Left cardiac atrium (tissue), 4 donors: ENCODE measurements at regions of chr17 and their contacts with region 1.

Region 1: DNA sequence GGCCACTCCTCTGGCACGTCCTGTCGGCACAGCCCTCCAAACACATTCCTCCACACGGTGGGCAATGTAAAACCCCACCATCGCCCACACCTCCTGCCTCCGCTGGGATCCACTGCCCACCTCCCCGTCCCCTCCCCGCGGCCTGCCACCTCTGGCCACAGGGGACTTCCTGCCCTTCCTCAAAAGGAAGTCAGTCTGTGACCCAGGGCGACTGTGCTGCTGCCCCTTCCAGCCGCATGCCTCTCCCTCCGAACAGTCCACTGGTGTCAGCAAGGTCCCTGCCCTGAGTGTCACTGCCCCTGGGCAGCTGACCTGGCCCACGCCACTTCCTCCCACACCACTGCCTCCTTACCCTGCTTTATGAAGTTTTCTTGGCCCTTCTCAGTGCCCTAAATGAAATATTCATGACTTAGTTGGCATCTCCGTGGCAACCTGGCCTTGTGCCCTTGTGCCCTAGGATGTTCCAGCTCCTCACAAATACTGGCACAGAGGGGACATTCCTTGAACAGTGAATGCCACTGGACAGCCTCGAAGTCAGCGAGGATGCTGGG is 2.0 kb downstream of the PLD6 start:
- DNase-seq: no peak
- ATAC-seq: peak; percentile 4 to 20

Region 2: DNA sequence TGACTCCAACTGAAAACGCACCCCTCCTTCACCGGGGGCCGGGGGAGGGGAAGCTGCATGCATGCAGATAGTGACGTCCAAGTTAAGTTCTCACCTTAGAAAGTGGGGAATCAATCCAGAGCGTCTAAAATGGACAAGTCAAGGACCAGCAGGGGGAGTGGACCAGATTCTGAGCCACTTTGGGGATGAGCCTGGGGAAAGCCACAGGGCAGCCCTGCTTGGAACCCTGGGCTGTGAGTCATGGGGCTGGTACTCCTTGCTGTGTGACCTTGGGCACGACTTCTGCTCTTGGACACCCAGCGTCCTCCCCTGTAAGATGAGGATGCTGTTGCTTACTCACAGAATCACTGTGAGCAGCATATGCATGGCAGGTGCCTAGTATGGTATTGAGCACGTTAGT is 241.3 kb before region 1 on chr17:
- intact Hi-C with region 1: no loop called
- DNase-seq: no peak
- ATAC-seq: no peak

Region 3: DNA sequence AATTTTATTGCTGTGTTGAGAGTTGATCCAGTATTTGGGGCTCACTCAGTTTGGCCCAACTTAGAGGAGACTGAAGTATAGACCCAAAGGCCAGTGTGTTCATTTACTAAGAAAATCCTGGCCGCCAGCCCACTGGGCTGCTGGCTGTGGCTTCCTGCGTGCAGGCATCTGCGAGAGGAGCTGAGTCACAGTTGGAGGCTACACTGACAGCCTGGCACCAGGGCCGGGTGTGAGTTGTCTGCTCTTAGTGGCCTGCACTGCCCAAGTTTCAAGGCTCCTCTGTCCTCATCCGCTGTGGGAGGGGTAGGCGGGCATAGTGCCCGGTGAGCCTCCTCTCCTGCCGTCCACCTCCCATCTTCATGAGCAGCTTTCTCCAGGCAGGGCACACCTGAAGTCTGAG is 52.2 kb before region 1 on chr17:
- intact Hi-C with region 1: no loop called
- DNase-seq: peak; percentile 92
- ATAC-seq: peak; percentile 95 to 96

Region 4: DNA sequence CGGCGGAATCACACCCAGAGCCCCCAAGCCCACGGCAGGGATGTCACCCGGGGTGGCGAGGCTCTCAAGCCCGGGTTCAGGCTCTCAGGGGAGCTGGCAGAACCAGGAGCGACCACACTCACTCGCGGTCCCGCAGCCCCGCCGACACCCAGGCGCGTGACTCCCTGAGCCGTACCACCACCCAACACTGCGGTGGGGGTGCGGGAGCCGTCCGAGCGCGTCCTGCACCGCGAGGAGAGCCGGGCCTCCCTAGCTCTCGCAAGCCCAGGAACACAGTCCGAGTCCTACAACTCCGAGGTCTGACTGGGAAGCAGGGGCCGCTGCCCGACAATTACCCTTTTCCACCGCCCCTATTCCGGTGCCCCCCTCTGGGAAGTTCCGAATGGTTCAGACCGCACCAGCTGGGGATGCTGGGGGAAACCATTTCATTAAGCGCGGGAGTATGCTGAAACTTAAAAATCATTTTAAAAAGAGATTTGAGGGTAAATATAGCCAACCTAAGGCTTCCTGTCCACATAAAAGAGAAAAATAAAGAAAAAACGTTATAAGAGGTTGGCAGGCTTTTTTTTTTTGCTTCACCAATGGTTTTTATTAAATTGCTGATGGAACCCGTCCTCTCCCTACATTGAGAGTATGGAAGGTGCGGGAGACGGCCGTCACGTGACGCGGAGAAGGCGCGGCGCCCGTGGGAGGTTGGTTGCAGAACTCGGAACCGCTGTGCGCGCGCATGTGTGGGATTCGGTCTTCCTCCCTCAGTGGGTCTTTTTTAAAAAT is 33.1 kb after region 1 on chr17 and contains the start of gene FLCN:
- intact Hi-C with region 1: loop called in 1 of 2 experiments (anchors 5 kb)
- DNase-seq: peak; percentile 96
- ATAC-seq: peak; percentile 95 to 97
- total RNA-seq, gene FLCN: 36.6 to 48.4 TPM

Region 5: DNA sequence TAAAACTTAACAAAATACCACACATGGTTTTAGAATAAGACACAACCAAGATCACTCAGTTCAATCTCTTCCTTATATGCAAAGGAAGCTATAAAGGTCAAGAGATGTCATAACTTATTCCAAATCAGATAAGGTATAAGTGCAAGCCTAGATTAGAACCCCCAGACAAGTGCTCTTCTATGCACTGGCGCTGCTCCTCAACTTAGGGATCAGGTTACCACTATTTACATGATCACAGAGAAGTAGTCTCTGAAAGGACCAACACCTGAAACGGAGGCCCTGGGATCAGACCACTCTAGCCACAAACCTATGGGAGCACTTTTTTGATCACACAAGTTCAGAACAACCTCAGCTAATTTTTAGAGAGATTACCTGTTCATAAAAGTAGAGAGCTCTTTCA is 60.3 kb after region 1 on chr17:
- intact Hi-C with region 1: no loop called
- DNase-seq: no peak
- ATAC-seq: no peak